CD4-positive, alpha-beta memory T cell (primary cell): ENCODE measurements at regions of chr10 and their contacts with region 1.

Region 1: GRCh38 chr10:110254467-110254866 is 47.1 kb downstream of the MXI1 start:
- DNase-seq: no peak
- H3K4me3 ChIP-seq: no peak overlapping the region
- H3K4me3 Mint-ChIP-seq: peak overlapping the region in 7 of 8 donors; percentile 4 to 70 (median 60)
- H3K27ac ChIP-seq: no peak overlapping the region
- H3K27ac Mint-ChIP-seq: peak overlapping the region in 5 of 7 donors; percentile 33 to 77 (median 53)
- H3K4me1 ChIP-seq: peaks cover 15% of the 10 kb centered on the region
- H3K4me1 Mint-ChIP-seq: peaks cover 24 to 43% (median 34%) of the 10 kb centered on the region in 4 donors
- H3K27me3 ChIP-seq: no peaks in the 10 kb centered on the region
- H3K27me3 Mint-ChIP-seq: no peaks in the 10 kb centered on the region

Region 2: DNA sequence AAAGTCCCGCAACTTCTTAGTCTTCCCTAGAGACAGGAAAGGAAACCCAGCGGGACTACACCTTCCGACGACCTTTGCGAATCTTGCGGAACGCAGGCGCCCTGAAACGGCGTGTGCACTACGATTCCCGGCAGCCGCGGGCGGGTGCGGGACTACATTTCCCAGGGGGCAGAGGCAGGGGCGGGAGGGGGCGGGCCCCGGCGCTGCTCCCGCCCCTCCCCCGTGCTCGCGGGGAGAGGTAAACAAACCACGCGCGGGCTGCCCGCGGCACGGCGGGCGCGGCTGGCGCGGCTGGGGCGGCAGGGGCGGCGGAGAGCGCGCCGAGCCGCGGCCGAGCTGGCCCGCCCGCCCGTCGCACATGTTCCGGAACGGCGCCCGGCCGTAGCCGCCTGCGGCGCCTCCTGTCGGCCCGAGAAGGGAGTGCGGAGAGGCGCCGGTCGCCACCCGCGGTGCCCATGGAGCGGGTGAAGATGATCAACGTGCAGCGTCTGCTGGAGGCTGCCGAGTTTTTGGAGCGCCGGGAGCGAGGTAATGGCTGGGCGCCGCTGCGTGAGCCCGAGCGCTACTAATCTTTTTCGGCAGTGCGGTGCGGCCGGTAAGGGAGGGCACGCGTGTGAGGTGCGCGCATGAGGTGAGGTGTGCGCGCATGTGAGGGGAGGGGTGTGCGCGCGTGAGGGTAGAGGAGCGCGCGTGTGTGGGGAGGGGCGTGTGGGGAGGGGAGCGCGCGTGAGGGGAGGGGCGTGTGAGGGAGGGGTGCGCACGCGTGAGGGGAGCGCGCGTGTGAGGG is 28.5 kb before region 1 on chr10:
- CTCF ChIA-PET with region 1: no interaction called
- POLR2A ChIA-PET with region 1: no interaction called
- intact Hi-C with region 1: no loop called
- DNase-seq: peak; percentile 88 to 90 (median 89)
- H3K4me3 ChIP-seq: peak overlapping the region; percentile 39 to 82
- H3K4me3 Mint-ChIP-seq: peak overlapping the region; percentile 92 to 96 (median 94)
- H3K27ac ChIP-seq: peak overlapping the region; percentile 67
- H3K27ac Mint-ChIP-seq: peak overlapping the region; percentile 91 to 96 (median 96)
- H3K4me1 ChIP-seq: peaks cover 29% of the 10 kb centered on the region
- H3K4me1 Mint-ChIP-seq: peaks cover 27 to 62% (median 42%) of the 10 kb centered on the region in 4 donors
- H3K27me3 ChIP-seq: no peaks in the 10 kb centered on the region
- H3K27me3 Mint-ChIP-seq: no peaks in the 10 kb centered on the region

Region 3: DNA sequence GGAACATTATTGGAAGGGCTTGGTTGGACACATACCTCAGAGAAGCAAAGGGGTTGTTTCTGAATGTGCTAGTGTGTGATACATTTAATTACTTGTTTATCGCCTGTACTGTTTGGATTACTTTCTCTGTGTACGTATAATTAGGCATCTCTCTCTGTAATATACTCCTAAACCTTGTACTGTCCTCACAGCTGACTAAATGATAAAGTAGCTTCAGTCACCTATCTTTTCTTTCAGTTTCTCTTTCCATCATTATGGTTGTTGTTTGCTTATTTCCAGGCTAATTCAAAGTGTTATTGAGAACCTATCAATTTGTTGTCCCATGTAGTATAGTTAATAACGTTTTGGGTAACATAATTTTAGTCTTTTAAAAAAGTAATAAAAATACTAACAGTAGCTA is 13.1 kb before region 1 on chr10:
- CTCF ChIA-PET with region 1: interaction called, 3 read pairs
- POLR2A ChIA-PET with region 1: interaction called, 5 read pairs
- intact Hi-C with region 1: loop called (anchors 2 kb)
- DNase-seq: no peak
- H3K4me3 ChIP-seq: no peak overlapping the region
- H3K4me3 Mint-ChIP-seq: peak overlapping the region in 7 of 8 donors; percentile 12 to 83 (median 70)
- H3K27ac ChIP-seq: no peak overlapping the region
- H3K27ac Mint-ChIP-seq: peak overlapping the region in 3 of 7 donors; percentile 0 to 74 (median 63)
- H3K4me1 ChIP-seq: peaks cover 28% of the 10 kb centered on the region
- H3K4me1 Mint-ChIP-seq: peaks cover 22 to 48% (median 35%) of the 10 kb centered on the region in 4 donors
- H3K27me3 ChIP-seq: no peaks in the 10 kb centered on the region
- H3K27me3 Mint-ChIP-seq: no peaks in the 10 kb centered on the region

Region 4: DNA sequence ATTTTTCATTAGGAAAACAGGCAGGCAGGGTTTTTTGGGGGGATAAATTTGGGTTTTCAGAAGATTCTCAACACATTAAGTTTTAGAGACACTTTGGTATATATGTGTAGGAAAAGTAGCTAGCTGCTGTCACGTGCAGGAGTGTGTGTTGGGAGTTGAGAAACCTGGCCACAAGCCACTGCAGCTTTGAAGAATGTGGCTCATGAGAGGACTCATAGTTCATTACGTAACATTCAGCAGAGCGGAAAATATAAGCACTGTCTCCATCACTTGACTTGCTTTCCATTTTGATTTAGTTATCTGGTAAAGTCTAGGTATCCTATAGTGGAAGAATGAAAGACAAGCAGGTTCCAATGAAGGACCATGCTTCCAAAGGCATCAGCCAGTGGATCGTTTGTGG is 19.0 kb after region 1 on chr10:
- CTCF ChIA-PET with region 1: no interaction called
- POLR2A ChIA-PET with region 1: no interaction called
- intact Hi-C with region 1: loop called (anchors 2 kb)
- DNase-seq: peak; percentile 20 to 74 (median 36)
- H3K4me3 ChIP-seq: no peak overlapping the region
- H3K4me3 Mint-ChIP-seq: peak overlapping the region in 5 of 8 donors; percentile 6 to 87 (median 66)
- H3K27ac ChIP-seq: no peak overlapping the region
- H3K27ac Mint-ChIP-seq: peak overlapping the region in 6 of 7 donors; percentile 33 to 96 (median 89)
- H3K4me1 ChIP-seq: peaks cover 47% of the 10 kb centered on the region
- H3K4me1 Mint-ChIP-seq: peaks cover 32 to 74% (median 61%) of the 10 kb centered on the region in 4 donors
- H3K27me3 ChIP-seq: no peaks in the 10 kb centered on the region
- H3K27me3 Mint-ChIP-seq: no peaks in the 10 kb centered on the region